ENCODE measurements at regions of chr5 and their contacts with region 1.

Region 1: DNA sequence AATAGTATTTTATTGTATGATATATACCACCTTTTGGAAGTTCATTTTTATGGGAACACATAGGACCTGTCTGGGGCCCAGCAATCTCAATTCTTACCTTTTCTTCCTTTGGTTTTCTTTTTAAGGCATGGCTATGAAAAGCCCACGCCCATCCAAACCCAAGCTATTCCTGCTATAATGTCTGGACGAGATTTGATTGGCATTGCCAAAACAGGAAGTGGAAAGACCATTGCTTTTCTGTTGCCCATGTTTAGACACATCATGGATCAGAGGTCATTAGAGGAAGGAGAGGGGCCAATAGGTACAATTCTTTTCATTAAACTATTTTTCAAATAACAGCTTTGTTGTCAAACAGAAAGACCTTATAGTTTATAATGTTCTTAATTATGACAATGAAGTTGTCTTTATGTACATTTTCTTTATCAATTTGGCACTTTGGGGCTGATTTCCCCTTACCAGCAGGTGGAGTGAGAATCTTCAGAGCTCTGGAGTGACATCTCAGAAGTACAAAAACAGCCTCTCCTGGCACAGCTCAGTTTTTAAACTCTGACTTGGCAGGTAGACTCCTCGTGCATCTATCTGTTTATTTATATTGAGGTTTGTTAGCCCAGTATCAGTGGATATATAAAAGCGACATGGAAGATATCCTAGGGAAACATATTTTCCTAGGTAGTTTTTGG is 25.8 kb downstream of the DDX46 start:
- DNase-seq: no peak
- ATAC-seq: no peak
- H3K4me3 ChIP-seq: no peak overlapping the region
- H3K27ac ChIP-seq: no peak overlapping the region
- H3K4me1 ChIP-seq: no peaks in the 10 kb centered on the region
- H3K27me3 ChIP-seq: no peaks in the 10 kb centered on the region
- CTCF ChIP-seq: no peak

Region 2: GRCh38 chr5:134724872-134725271 is 59.5 kb before region 1 on chr5:
- intact Hi-C with region 1: loop called in 1 of 2 experiments (anchors 10 kb)
- DNase-seq: no peak
- ATAC-seq: no peak
- H3K4me3 ChIP-seq: no peak overlapping the region
- H3K27ac ChIP-seq: no peak overlapping the region
- H3K4me1 ChIP-seq: no peaks in the 10 kb centered on the region
- H3K27me3 ChIP-seq: no peaks in the 10 kb centered on the region
- CTCF ChIP-seq: no peak

Region 3: GRCh38 chr5:134738133-134738962 is 46.0 kb before region 1 on chr5 and contains the start of gene CAMLG:
- intact Hi-C with region 1: no loop called
- DNase-seq: peak; percentile 99
- ATAC-seq: peak; percentile 98 to 99 (median 99)
- H3K4me3 ChIP-seq: peak within 1 kb of the TSS; percentile 96
- H3K27ac ChIP-seq: peak within 1 kb of the TSS; percentile 97
- H3K4me1 ChIP-seq: peaks cover 13% of the 10 kb centered on the region
- H3K27me3 ChIP-seq: no peaks in the 10 kb centered on the region
- CTCF ChIP-seq: peak; percentile 37
- total RNA-seq, gene CAMLG: 25.8 to 44.9 (median 29.6) TPM

Region 4: DNA sequence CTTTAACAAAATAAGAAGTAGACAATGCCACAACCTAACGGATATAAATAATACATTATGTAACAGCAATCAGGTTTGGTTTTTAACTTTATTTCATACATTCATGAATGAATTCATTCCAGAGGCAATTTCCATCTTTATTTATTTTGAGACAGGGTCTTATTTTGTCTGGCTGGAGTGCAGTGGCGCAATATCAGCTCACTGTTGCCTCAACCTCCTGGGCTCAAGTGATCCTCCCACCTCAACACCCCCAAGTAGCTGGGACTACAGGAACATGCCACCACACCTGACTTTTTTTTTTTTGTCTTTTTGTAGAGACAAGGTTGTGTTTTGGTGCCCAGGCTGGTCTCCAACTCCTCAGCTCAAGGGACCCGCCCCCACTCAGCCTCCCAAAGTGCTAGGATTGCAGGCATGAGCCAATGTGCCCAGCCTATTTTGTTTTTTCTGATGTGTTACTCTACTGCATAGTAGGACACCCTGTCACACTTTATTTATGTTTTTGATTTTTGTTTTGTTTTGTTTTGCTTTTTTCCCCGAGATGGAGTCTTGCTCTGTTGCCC is 35.1 kb after region 1 on chr5:
- intact Hi-C with region 1: loop called in 1 of 2 experiments (anchors 5 kb)
- DNase-seq: no peak
- ATAC-seq: peak in 1 of 4 donors; percentile 32
- H3K4me3 ChIP-seq: no peak overlapping the region
- H3K27ac ChIP-seq: no peak overlapping the region
- H3K4me1 ChIP-seq: no peaks in the 10 kb centered on the region
- H3K27me3 ChIP-seq: no peaks in the 10 kb centered on the region
- CTCF ChIP-seq: no peak

Measured in psoas muscle (tissue), 8 donors.